ENCODE measurements at regions of chr12 and their contacts with region 1.

Region 1: GRCh38 chr12:95942524-95943329 is at the start of gene CCDC38:
- DNase-seq: peak; percentile 67
- ATAC-seq: peak; percentile 92
- H3K4me3 Mint-ChIP-seq: peak within 1 kb of the TSS; percentile 90
- H3K27ac Mint-ChIP-seq: peak within 1 kb of the TSS; percentile 83
- H3K4me1 Mint-ChIP-seq: peaks cover 10% of the 10 kb centered on the region
- H3K27me3 Mint-ChIP-seq: no peaks in the 10 kb centered on the region
- CTCF ChIP-seq: no peak
- total RNA-seq, gene CCDC38: 0.09 and 0.42 TPM in 2 replicates

Region 2: DNA sequence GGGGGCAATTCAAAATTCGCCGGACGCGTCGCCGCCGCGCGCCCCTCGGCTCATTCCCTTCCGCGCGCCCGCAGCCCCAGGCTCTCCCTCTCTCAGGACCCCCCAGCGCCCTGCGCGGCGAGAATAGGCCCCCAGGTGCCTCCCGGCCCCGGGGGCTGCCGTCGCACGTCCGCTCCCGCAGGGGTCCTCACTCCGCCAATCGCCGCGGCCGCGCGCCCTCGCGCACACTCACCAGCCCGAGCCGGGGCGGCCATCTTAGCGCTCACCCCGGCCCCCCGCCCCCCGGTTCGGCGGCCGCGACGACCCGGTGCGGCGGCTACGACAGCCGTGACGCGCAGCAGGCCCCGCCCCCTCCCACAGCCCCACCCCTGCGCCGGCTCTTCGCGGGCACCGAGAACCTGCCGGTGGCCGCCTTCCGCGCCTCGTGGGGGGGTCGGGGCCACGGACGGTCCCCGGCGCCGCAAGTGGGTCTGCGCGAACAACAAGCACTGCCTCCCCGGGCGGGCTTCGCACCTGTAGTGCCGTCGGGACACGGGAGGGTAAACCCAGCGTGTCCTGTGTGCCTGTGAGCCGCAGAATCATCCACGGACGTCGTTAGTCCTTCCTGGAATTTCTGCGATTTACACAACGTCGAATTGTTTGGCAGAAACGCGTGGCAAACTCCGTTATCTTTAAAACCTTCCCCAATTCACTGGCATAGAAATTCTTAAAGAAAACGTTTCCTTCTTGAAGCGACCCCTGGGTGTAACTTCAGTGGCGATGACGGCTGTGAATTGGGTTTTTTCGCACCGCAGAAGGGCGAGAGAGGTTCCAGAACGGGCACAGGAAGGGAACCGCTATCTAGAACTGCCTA is 394.0 kb before region 1 on chr12:
- CTCF ChIA-PET with region 1: no interaction called
- POLR2A ChIA-PET with region 1: no interaction called
- intact Hi-C with region 1: loop called (anchors 1 kb)
- DNase-seq: peak; percentile 64
- ATAC-seq: peak; percentile 86
- H3K4me3 Mint-ChIP-seq: peak overlapping the region; percentile 91
- H3K27ac Mint-ChIP-seq: peak overlapping the region; percentile 73
- H3K4me1 Mint-ChIP-seq: peaks cover 22% of the 10 kb centered on the region
- H3K27me3 Mint-ChIP-seq: no peaks in the 10 kb centered on the region
- CTCF ChIP-seq: no peak

Region 3: DNA sequence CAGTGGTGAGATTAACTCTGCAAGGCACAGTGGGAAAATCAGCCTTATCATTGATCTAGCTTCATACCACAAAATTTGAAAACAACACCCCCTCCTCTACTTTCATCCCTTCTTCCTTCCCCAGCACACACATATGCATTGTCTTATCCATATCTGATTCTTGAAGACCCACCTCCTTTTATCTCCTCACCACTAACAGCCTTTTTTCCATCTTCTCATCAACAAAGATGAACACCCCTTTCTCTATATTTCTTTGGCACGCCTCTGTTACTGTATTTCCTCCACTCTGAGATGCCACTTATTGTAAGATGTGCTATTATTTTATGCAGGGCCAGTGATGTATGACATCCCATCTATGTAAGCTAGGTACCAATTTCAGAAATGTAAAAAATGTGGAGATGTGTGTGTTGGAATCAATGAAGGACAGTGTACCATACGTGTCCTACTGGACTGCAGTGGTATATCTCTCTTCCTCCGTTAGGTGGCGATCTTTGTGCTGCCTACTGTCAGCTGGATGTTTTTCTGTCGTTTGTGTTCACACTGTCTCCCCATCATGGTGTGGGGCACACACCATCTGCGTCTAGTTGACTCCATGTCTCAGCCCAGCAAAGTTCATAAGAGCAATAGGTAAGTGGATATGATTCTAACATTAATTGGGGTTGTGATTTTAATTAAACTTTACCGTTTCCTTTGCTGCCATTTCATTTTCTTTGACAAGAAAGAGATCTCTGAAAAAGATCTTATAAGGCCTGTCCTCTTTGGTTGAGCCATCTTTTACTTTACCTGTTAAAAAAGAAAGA is 24.3 kb before region 1 on chr12:
- CTCF ChIA-PET with region 1: interaction called, 7 read pairs
- POLR2A ChIA-PET with region 1: no interaction called
- intact Hi-C with region 1: loop called (anchors 2 kb)
- DNase-seq: no peak
- ATAC-seq: peak; percentile 82
- H3K4me3 Mint-ChIP-seq: no peak overlapping the region
- H3K27ac Mint-ChIP-seq: no peak overlapping the region
- H3K4me1 Mint-ChIP-seq: no peaks in the 10 kb centered on the region
- H3K27me3 Mint-ChIP-seq: peaks cover 6% of the 10 kb centered on the region
- CTCF ChIP-seq: peak; percentile 43

Region 4: DNA sequence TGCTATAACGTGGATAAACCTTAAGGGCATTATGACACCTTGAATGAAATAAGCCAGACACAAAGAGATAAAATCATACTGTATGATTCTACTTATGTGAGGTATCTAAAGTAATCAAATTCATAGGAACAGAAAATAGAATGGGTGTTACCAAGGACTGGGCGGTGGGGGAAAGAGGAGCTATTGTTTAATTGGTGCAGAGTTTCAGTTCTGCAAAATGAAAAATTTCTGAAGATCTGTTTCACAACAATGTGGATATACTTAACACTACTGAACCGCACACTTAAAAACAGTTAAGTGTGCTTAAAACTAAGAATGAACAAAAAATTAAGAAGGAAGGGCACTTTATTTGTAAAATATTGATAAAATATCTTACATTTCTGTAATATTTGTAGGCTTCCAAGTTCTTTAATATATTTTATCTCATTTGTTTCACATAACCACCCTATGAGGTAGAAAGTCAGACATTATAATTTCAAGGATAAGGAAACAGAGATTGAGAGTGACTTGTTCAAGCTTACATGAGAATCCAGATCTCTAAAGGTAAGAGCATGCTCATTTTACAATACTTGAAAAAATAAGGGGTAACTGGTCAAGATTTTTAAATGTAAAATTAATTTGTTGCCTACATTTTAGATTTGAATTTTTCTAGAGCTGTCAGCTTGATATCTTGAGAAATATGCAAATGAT is 77.7 kb after region 1 on chr12:
- CTCF ChIA-PET with region 1: no interaction called
- POLR2A ChIA-PET with region 1: no interaction called
- intact Hi-C with region 1: loop called (anchors 2 kb)
- DNase-seq: no peak
- ATAC-seq: peak; percentile 96
- H3K4me3 Mint-ChIP-seq: peak overlapping the region; percentile 63
- H3K27ac Mint-ChIP-seq: peak overlapping the region; percentile 90
- H3K4me1 Mint-ChIP-seq: peaks cover 33% of the 10 kb centered on the region
- H3K27me3 Mint-ChIP-seq: no peaks in the 10 kb centered on the region
- CTCF ChIP-seq: no peak

Region 5: GRCh38 chr12:96035278-96036236 is 92.8 kb after region 1 on chr12 and contains the start of gene LTA4H:
- CTCF ChIA-PET with region 1: no interaction called
- POLR2A ChIA-PET with region 1: interaction called, 3 read pairs
- intact Hi-C with region 1: loop called (anchors 1 kb)
- DNase-seq: peak; percentile 88
- ATAC-seq: peak; percentile 86
- H3K4me3 Mint-ChIP-seq: no peak within 1 kb of the TSS
- H3K27ac Mint-ChIP-seq: no peak within 1 kb of the TSS
- H3K4me1 Mint-ChIP-seq: peaks cover 26% of the 10 kb centered on the region
- H3K27me3 Mint-ChIP-seq: no peaks in the 10 kb centered on the region
- CTCF ChIP-seq: no peak
- total RNA-seq, gene LTA4H: 119 and 124 TPM in 2 replicates